Mucosa of descending colon (tissue), 3 donors: ENCODE measurements at regions of chr9 and their contacts with region 1.

Region 1: DNA sequence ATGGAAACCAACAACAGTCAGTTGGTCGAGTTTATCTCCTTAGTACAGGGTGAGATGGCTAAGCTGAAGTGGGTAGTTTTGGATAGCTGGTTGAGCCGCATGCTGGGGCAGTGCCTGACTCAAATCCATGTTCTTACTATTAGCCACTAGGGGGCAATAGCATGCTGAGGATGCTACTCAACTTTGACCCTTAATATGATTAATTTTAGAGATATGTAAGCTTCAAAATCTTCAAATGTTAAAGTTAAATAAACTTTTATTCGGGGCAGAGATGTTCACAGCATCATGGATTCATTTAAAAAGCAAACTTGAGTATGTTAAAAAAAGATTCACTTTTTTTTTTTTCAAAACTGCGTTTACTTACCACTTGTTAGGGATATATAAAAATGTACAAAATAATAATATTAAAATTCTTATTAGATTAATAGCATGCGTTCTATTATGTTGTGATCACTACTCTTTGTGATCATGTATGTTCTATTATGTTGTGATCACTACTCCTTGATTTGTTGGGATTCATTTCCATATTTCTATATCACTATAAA is 57.0 kb downstream of the C9orf153 start:
- DNase-seq: peak in 1 of 3 donors; percentile 16
- ATAC-seq: peak; percentile 72
- H3K4me3 ChIP-seq: no peak overlapping the region
- H3K4me1 ChIP-seq: no peaks in the 10 kb centered on the region
- CTCF ChIP-seq: peak; percentile 56

Region 2: GRCh38 chr9:86257391-86257790 is 55.0 kb after region 1 on chr9:
- intact Hi-C with region 1: no loop called
- DNase-seq: no peak
- ATAC-seq: no peak
- H3K4me3 ChIP-seq: no peak overlapping the region
- H3K4me1 ChIP-seq: no peaks in the 10 kb centered on the region
- CTCF ChIP-seq: no peak

Region 3: DNA sequence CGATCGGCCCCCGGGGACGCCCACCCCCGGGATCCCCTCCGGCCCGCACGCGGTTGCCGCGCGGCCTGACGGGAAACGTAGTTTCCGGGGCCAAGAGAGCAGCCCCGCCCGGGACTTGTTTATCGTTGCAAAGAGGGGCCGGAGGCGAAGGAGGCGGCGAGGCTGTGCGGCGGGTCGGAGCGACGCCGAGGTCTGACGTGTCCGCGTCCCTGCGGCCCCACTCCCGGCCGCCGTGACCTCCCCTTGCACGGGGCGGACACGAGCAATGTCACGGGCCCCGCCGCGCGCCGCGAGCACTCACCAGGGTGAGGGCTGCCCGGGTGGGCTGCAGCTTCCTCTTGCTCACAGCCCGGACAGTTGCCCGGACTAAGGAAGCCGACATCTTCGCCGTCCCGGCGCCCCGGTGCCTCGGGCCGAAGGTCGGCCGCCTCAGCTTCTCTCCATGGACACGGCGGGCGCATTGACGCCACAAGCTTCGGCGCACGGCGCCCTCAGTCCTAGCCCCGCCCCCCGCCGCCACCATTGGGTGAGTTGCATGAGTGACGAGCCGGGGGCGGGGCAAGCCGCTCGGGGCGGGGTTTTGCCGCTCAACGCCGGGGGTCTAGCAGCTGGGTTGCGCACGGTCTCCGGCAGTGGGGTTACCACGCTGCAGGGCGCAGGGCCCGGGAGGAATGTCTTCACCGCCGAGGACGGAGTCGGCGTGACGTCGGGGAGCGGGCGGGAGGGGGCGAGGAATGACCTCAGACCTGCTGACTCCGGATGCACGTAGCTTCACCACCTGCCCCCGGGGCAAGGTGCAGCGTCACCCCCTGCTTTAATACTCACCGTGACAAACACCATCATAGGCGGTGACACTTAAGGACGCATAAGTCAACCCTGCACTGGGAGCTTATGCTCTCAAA is 79.9 kb after region 1 on chr9 and contains the start of gene ISCA1:
- intact Hi-C with region 1: loop called in 1 of 2 experiments (anchors 5 kb)
- DNase-seq: peak; percentile 98 to 99 (median 99)
- ATAC-seq: peak; percentile 97
- H3K4me3 ChIP-seq: peak within 1 kb of the TSS; percentile 46
- H3K4me1 ChIP-seq: peaks cover 16% of the 10 kb centered on the region
- CTCF ChIP-seq: no peak
- total RNA-seq, gene ISCA1: 24.1 to 36.6 (median 31.4) TPM